CD8-positive, alpha-beta T cell (primary cell): ENCODE measurements at regions of chr7 and their contacts with region 1.

Region 1: DNA sequence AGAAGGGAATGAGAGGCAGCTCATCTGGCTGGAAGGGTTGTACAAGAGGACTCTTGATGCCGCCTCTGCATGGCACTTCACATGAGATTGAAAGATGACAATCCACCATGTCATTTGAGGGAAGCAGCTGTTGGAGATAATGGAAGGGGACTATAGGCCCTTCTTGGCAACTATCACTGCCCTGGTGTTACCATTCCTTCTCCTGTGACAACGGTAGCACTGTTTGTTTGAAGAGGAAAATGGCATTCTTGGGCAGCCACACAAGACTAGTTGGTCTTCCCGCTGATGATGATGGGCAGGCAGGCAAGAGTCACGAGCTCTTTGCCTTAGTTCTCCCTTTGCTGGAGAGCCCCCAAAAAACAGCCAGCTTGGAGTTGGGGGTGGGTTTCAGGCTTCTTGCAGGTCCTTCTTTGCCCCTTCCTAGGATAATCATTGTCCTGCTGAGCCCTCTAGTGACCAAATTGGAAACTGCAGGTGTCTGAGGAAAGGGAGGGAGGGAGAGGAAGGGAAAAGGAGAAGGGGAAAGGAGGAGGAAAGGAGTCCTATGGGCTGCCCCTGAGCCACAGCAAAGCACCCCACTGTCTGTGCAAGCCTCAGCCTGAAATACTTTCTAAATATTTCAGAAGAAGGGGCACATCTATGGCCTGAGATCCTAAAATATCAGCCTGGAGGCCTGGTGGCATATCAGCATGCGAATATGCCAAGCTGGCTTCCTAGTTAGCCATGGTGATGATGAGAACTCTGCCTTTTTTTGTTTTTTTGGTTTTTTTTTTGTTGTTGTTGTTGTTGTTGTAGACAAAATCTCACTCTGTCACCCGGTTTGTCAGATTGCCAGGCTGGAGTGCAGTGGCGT is 165.6 kb upstream of the KMT2E start:
- DNase-seq: peak; percentile 9 to 63 (median 54)
- ATAC-seq: peak; percentile 31
- H3K4me3 ChIP-seq: no peak overlapping the region
- H3K4me3 Mint-ChIP-seq: no peak overlapping the region
- H3K27ac ChIP-seq: no peak overlapping the region
- H3K27ac Mint-ChIP-seq: no peak overlapping the region
- H3K4me1 ChIP-seq: no peaks in the 10 kb centered on the region
- H3K4me1 Mint-ChIP-seq: no peaks in the 10 kb centered on the region
- H3K27me3 ChIP-seq: no peaks in the 10 kb centered on the region
- H3K27me3 Mint-ChIP-seq: peaks cover 29% of the 10 kb centered on the region
- CTCF ChIP-seq: peak; percentile 79

Region 2: DNA sequence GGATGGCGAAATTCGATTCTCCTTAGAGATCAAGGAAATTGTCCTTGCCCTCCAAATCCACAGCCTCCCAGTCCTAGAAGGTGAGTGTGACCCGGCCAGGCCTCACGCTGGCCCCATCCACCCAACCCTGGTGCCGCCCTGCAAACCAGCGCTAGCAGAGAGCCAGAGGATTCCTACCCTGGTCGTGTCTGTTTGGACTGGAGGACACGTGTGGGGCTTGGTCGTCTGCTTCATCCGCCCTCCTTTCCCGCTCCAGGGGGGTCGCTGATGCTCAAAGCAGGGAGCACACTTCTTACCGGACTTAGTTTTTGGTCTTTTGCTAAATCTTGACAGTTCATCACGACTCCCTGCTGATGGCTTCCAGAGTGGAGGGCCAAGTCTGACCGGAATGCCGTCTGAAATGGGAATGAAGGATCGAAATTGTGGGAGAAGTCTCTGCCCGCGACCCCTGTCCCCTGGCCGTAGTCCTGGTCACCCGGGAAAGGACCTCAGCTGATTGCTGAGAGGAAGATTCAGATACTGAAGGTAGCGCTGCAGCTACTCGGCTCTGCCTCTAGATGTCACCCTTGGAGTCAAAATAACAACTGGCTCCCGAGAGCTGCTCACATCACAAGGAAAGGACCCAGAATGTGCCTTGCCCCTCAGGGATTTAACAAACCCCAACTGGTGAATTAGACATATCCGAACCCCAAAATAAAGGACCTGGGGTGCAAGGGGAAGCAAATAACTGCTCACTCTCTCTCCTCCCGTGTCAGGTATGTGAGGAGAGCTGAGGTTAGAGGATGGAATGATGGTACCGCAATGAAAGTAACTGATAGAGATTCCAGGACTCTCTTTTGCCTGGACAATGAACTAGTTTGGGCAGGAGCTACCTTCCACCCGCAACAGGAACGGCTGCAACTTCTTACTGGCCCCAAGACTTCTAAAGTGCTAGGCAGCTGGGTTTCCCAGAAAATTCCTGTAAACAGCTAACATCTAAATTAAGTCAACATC is 617.0 kb before region 1 on chr7:
- CTCF ChIA-PET with region 1: interaction called, 35 read pairs
- POLR2A ChIA-PET with region 1: no interaction called
- intact Hi-C with region 1: loop called in 1 of 2 experiments (anchors 2 kb)
- DNase-seq: peak in 8 of 9 experiments; percentile 9 to 60 (median 39)
- ATAC-seq: peak; percentile 80
- H3K4me3 ChIP-seq: no peak overlapping the region
- H3K4me3 Mint-ChIP-seq: no peak overlapping the region
- H3K27ac ChIP-seq: no peak overlapping the region
- H3K27ac Mint-ChIP-seq: no peak overlapping the region
- H3K4me1 ChIP-seq: no peaks in the 10 kb centered on the region
- H3K4me1 Mint-ChIP-seq: no peaks in the 10 kb centered on the region
- H3K27me3 ChIP-seq: peaks cover 0 to 2% of the 10 kb centered on the region in 2 experiments
- H3K27me3 Mint-ChIP-seq: peaks cover 32% of the 10 kb centered on the region
- CTCF ChIP-seq: peak; percentile 78

Region 3: GRCh38 chr7:104862719-104863118 is 14.4 kb after region 1 on chr7:
- CTCF ChIA-PET with region 1: interaction called, 28 read pairs
- POLR2A ChIA-PET with region 1: no interaction called
- intact Hi-C with region 1: no loop called
- DNase-seq: no peak
- ATAC-seq: no peak
- H3K4me3 ChIP-seq: no peak overlapping the region
- H3K4me3 Mint-ChIP-seq: no peak overlapping the region
- H3K27ac ChIP-seq: no peak overlapping the region
- H3K27ac Mint-ChIP-seq: no peak overlapping the region
- H3K4me1 ChIP-seq: peaks cover 9% of the 10 kb centered on the region
- H3K4me1 Mint-ChIP-seq: peaks cover 10% of the 10 kb centered on the region
- H3K27me3 ChIP-seq: no peaks in the 10 kb centered on the region
- H3K27me3 Mint-ChIP-seq: peaks cover 17% of the 10 kb centered on the region
- CTCF ChIP-seq: no peak

Region 4: GRCh38 chr7:105141068-105141467 is 292.7 kb after region 1 on chr7:
- CTCF ChIA-PET with region 1: no interaction called
- POLR2A ChIA-PET with region 1: no interaction called
- intact Hi-C with region 1: no loop called
- DNase-seq: peak in 2 of 9 experiments; percentile 13 to 23
- ATAC-seq: no peak
- H3K4me3 ChIP-seq: no peak overlapping the region
- H3K4me3 Mint-ChIP-seq: no peak overlapping the region
- H3K27ac ChIP-seq: no peak overlapping the region
- H3K27ac Mint-ChIP-seq: no peak overlapping the region
- H3K4me1 ChIP-seq: no peaks in the 10 kb centered on the region
- H3K4me1 Mint-ChIP-seq: peaks cover 12% of the 10 kb centered on the region
- H3K27me3 ChIP-seq: no peaks in the 10 kb centered on the region
- H3K27me3 Mint-ChIP-seq: no peaks in the 10 kb centered on the region
- CTCF ChIP-seq: no peak